ENCODE measurements at regions of chr4 and their contacts with region 1.

Region 1: GRCh38 chr4:122827879-122828601 is 1.4 kb downstream of the FGF2 start:
- DNase-seq: no peak
- ATAC-seq: peak; percentile 38 to 59 (median 52)
- H3K4me3 ChIP-seq: peak overlapping the region; percentile 66 to 86 (median 80)
- H3K27ac ChIP-seq: peak overlapping the region; percentile 68 to 93 (median 80)
- H3K4me1 ChIP-seq: peaks cover 0 to 14% (median 0%) of the 10 kb centered on the region in 12 donors
- H3K27me3 ChIP-seq: peaks cover 0 to 38% (median 0%) of the 10 kb centered on the region in 9 donors
- CTCF ChIP-seq: peak in 2 of 12 donors; percentile 5 to 7
- POLR2A ChIP-seq: no peak

Region 2: GRCh38 chr4:122764821-122765215 is 63.2 kb before region 1 on chr4:
- intact Hi-C with region 1: loop called in 3 of 10 experiments (anchors 5 to 10 kb)
- DNase-seq: no peak
- ATAC-seq: no peak
- H3K4me3 ChIP-seq: no peak overlapping the region
- H3K27ac ChIP-seq: no peak overlapping the region
- H3K4me1 ChIP-seq: peaks cover 0 to 24% (median 6%) of the 10 kb centered on the region in 12 donors
- H3K27me3 ChIP-seq: no peaks in the 10 kb centered on the region
- CTCF ChIP-seq: no peak
- POLR2A ChIP-seq: no peak

Region 3: GRCh38 chr4:122898370-122899150 is 70.5 kb after region 1 on chr4:
- intact Hi-C with region 1: loop called in 3 of 10 experiments (anchors 5 to 10 kb)
- DNase-seq: no peak
- ATAC-seq: peak in 1 of 4 donors; percentile 64
- H3K4me3 ChIP-seq: no peak overlapping the region
- H3K27ac ChIP-seq: no peak overlapping the region
- H3K4me1 ChIP-seq: peaks cover 0 to 6% (median 0%) of the 10 kb centered on the region in 12 donors
- H3K27me3 ChIP-seq: no peaks in the 10 kb centered on the region
- CTCF ChIP-seq: no peak
- POLR2A ChIP-seq: no peak

Region 4: GRCh38 chr4:122914292-122914904 is 86.4 kb after region 1 on chr4:
- intact Hi-C with region 1: loop called in 1 of 10 experiments (anchors 10 kb)
- DNase-seq: no peak
- ATAC-seq: peak in 2 of 4 donors; percentile 46 to 52
- H3K4me3 ChIP-seq: no peak overlapping the region
- H3K27ac ChIP-seq: no peak overlapping the region
- H3K4me1 ChIP-seq: no peaks in the 10 kb centered on the region
- H3K27me3 ChIP-seq: no peaks in the 10 kb centered on the region
- CTCF ChIP-seq: peak in 11 of 12 donors; percentile 13 to 62 (median 37)
- POLR2A ChIP-seq: no peak

Region 5: GRCh38 chr4:122922877-122923511 is 95.0 kb after region 1 on chr4:
- intact Hi-C with region 1: loop called in 4 of 10 experiments (anchors 2 to 10 kb)
- DNase-seq: peak; percentile 83 to 89 (median 87)
- ATAC-seq: peak; percentile 98 to 99 (median 99)
- H3K4me3 ChIP-seq: peak overlapping the region; percentile 68 to 95 (median 85)
- H3K27ac ChIP-seq: peak overlapping the region; percentile 62 to 86 (median 77)
- H3K4me1 ChIP-seq: peaks cover 0 to 21% (median 12%) of the 10 kb centered on the region in 12 donors
- H3K27me3 ChIP-seq: no peaks in the 10 kb centered on the region
- CTCF ChIP-seq: peak in 1 of 12 donors; percentile 5
- POLR2A ChIP-seq: no peak

Measured in heart left ventricle (tissue), 16 donors.